Activated CD8-positive, alpha-beta T cell treated with anti-CD3 and anti-CD28 coated beads for 36 hours (primary cell): ENCODE measurements at regions of chr1 and their contacts with region 1.

Region 1: DNA sequence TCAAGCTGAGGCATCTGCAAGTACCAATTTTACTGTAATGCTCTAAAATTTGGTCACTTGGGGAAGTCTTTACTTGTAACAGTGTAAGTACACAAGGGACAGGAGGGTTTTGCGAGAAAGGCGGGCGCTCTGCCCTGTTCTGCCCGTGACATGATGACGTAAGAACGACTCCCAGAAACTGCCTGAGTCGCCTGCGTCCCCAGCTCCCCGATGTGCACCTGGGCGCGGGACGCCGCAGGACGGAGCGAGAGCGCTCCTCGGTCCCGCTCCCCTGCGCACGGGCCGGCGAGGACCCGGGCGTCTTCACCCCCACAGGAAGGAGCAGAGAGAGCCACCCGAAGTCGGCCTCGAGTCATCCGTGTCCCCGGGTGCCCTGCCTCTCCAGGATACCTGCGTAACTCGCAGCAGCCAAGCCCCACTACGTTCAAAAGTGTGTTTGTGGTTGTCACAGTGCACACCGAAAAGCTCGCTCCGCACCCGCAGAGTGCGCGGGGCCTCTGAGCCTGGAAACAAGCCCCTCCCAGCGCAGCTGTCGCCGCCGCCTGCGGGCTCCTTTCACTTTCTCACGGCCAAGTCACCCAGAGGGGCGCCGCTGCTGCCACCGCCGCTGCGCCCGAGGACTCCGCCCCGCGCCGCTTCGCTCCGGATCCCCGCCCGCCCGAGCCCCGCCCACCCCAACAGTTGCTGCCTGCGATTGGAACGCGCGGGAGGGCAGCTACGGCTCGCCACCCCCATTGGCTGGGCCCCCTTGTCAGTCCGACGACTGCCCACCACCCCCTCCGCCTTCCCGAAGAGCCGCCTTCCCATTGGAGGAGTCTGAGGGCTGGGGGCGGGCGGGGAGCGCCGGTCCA is 3.2 kb upstream of the ZBTB18 start:
- DNase-seq: peak; percentile 97
- ATAC-seq: peak; percentile 93
- H3K4me3 Mint-ChIP-seq: peak overlapping the region; percentile 92
- H3K27ac Mint-ChIP-seq: peak overlapping the region; percentile 96
- H3K4me1 Mint-ChIP-seq: peaks cover 44% of the 10 kb centered on the region
- H3K27me3 Mint-ChIP-seq: no peaks in the 10 kb centered on the region
- CTCF ChIP-seq: no peak

Region 2: GRCh38 chr1:243850452-243851256 is 197.2 kb before region 1 on chr1:
- CTCF ChIA-PET with region 1: no interaction called
- POLR2A ChIA-PET with region 1: no interaction called
- intact Hi-C with region 1: loop called (anchors 10 kb)
- DNase-seq: peak; percentile 88
- ATAC-seq: peak; percentile 61
- H3K4me3 Mint-ChIP-seq: peak overlapping the region; percentile 77
- H3K27ac Mint-ChIP-seq: peak overlapping the region; percentile 89
- H3K4me1 Mint-ChIP-seq: peaks cover 30% of the 10 kb centered on the region
- H3K27me3 Mint-ChIP-seq: no peaks in the 10 kb centered on the region
- CTCF ChIP-seq: no peak

Region 3: GRCh38 chr1:244272471-244273261 is 224.8 kb after region 1 on chr1:
- CTCF ChIA-PET with region 1: interaction called, 3 read pairs
- POLR2A ChIA-PET with region 1: no interaction called
- intact Hi-C with region 1: loop called (anchors 5 kb)
- DNase-seq: peak; percentile 77
- ATAC-seq: peak; percentile 97
- H3K4me3 Mint-ChIP-seq: no peak overlapping the region
- H3K27ac Mint-ChIP-seq: no peak overlapping the region
- H3K4me1 Mint-ChIP-seq: peaks cover 11% of the 10 kb centered on the region
- H3K27me3 Mint-ChIP-seq: peaks cover 3% of the 10 kb centered on the region
- CTCF ChIP-seq: peak; percentile 97